Upper lobe of right lung (tissue), 1 donor: ENCODE measurements at regions of chr17 and their contacts with region 1.

Region 1: GRCh38 chr17:40782450-40782849 is at the start of gene KRT27:
- DNase-seq: no peak
- ATAC-seq: no peak
- H3K4me3 ChIP-seq: no peak within 1 kb of the TSS
- H3K27ac ChIP-seq: no peak within 1 kb of the TSS
- H3K4me1 ChIP-seq: no peaks in the 10 kb centered on the region
- H3K27me3 ChIP-seq: peaks cover 11% of the 10 kb centered on the region
- CTCF ChIP-seq: no peak
- total RNA-seq, gene KRT27: 0.55 TPM

Region 2: GRCh38 chr17:40632216-40632615 is 150.2 kb before region 1 on chr17:
- intact Hi-C with region 1: loop called (anchors 5 kb)
- DNase-seq: no peak
- ATAC-seq: no peak
- H3K4me3 ChIP-seq: no peak overlapping the region
- H3K27ac ChIP-seq: no peak overlapping the region
- H3K4me1 ChIP-seq: no peaks in the 10 kb centered on the region
- H3K27me3 ChIP-seq: no peaks in the 10 kb centered on the region
- CTCF ChIP-seq: no peak

Region 3: DNA sequence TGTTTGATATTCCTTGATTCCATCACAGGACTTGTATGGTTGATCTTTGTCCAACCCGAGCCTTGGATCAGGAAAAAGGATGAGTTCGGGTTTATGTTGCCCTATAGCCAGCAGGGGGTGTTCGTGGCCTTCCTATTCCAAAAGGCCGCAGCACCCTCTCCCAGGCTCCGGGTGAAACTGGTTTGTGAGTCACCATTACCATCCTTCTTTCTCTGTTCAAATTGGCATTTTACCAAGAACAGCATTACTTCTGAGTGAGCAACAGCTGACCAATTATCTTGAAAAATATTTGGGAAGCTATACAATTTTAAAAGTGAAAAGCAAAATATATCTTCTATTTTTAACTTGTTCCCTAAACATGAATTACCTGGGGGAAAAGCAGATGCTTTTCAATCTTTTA is 126.9 kb after region 1 on chr17:
- intact Hi-C with region 1: no loop called
- DNase-seq: peak; percentile 83
- ATAC-seq: peak; percentile 99
- H3K4me3 ChIP-seq: no peak overlapping the region
- H3K27ac ChIP-seq: no peak overlapping the region
- H3K4me1 ChIP-seq: peaks cover 9% of the 10 kb centered on the region
- H3K27me3 ChIP-seq: peaks cover 9% of the 10 kb centered on the region
- CTCF ChIP-seq: peak; percentile 77

Region 4: DNA sequence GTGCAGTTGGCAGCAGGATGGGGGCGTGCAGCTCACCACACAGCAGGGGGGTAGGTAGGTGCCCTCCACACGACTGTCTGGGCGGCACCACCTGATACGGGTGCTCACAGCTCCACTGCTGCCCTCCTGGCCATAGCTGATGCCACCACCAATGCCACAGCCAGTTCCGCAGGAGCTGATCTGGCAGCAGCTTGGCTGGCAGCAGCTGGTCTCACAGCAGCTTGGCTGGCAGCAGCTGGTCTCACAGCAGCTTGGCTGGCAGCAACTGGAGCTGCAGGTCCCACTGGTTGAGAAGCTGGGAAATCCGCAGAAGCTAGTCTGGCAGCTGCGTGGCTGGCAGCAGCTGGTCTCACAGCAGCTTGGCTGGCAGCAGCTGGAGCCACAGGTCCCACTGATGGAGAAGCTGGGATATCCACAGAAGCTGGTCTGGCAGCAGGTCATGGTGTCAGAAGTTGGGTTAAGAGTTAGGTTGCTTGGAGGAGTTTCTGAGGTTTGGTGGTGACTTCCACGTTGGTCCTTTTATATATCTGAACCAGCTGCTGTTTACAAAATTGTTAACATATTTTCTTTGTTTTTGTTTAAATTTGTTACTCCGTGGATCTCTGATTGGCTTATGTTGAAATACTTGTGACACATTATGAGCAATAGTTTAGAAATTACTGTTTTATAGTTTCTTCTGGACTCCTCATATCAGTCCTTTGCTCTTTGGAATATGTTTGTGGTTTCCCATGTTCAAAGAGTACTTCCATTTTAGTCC is 244.4 kb after region 1 on chr17 and contains the start of gene KRTAP1-5:
- intact Hi-C with region 1: no loop called
- DNase-seq: no peak
- ATAC-seq: peak; percentile 22
- H3K4me3 ChIP-seq: no peak within 1 kb of the TSS
- H3K27ac ChIP-seq: no peak within 1 kb of the TSS
- H3K4me1 ChIP-seq: no peaks in the 10 kb centered on the region
- H3K27me3 ChIP-seq: peaks cover 5% of the 10 kb centered on the region
- CTCF ChIP-seq: no peak
- total RNA-seq, gene KRTAP1-5: not detected